Natural killer cell (primary cell): ENCODE measurements at regions of chr14 and their contacts with region 1.

Region 1: DNA sequence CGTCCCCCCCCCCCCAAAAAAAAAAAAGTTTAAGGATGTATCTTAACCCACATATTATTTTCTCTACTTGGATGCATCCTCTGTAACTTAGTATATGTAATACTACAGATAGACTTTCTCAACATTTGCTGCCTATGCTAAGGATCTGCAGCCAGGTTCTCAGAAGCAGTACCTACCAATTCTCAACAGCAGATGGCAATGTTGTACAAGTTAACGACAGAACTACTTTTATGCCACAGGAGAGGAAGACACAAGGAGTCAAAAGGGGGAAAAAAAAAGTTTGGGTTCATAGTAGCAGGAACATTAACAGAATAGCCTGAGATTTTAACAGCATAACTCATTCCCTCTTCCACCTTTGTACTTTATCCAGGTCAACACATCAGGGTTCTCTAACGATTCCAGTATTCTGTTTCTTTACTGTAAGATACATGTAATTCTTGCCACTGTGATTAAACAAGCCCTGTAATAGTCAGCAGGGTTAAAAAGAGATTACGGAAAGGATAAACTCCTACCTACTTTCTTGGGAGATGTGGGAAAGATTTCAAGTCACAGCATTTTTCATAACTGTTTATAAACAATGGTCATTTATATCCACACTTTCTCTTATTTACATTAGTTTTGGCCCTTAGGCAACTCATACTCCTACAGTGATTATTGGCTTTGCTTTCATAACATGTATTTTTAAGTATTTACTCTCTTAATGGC is 5.7 kb upstream of the NEK9 start:
- DNase-seq: peak in 1 of 2 donors; percentile 89
- ATAC-seq: peak; percentile 83 to 93 (median 92)
- H3K4me3 ChIP-seq: no peak overlapping the region
- H3K4me3 Mint-ChIP-seq: no peak overlapping the region
- H3K27ac ChIP-seq: no peak overlapping the region
- H3K27ac Mint-ChIP-seq: peak overlapping the region; percentile 58 to 77
- H3K4me1 ChIP-seq: peaks cover 6% of the 10 kb centered on the region
- H3K4me1 Mint-ChIP-seq: peaks cover 17 to 22% of the 10 kb centered on the region in 2 donors
- H3K27me3 ChIP-seq: no peaks in the 10 kb centered on the region
- H3K27me3 Mint-ChIP-seq: no peaks in the 10 kb centered on the region
- CTCF ChIP-seq: peak; percentile 77

Region 2: GRCh38 chr14:75094896-75095295 is 37.6 kb before region 1 on chr14:
- intact Hi-C with region 1: no loop called
- DNase-seq: no peak
- ATAC-seq: no peak
- H3K4me3 ChIP-seq: no peak overlapping the region
- H3K4me3 Mint-ChIP-seq: no peak overlapping the region
- H3K27ac ChIP-seq: no peak overlapping the region
- H3K27ac Mint-ChIP-seq: no peak overlapping the region
- H3K4me1 ChIP-seq: no peaks in the 10 kb centered on the region
- H3K4me1 Mint-ChIP-seq: no peaks in the 10 kb centered on the region
- H3K27me3 ChIP-seq: no peaks in the 10 kb centered on the region
- H3K27me3 Mint-ChIP-seq: no peaks in the 10 kb centered on the region
- CTCF ChIP-seq: no peak

Region 3: DNA sequence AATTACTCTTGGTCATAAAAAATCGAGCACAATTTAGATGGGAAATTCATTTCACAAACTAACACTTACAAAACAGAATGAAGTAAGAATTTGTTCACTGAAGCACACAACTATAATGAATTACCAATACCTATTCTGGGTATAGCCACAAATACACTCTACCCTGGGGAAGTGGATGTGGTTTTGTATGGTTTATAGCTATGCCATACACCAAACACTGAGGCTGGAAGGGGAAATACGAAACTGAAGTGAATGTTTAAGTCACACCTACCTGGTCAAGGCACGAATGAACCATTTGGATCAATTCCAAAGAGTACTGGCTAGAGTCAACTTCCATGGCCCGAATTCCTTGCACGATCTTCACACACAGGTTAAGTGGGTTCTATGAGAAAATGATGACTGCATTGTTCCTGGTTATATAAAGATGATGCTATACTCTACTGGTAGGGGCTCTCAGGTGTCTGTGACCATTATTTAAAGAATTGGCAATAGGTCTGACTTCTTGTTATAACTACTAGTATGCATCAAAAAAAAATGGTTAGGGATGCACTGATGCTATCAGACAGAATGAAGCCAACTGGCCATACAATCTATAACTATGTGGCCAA is 18.5 kb before region 1 on chr14:
- intact Hi-C with region 1: no loop called
- DNase-seq: peak in 1 of 2 donors; percentile 9
- ATAC-seq: no peak
- H3K4me3 ChIP-seq: no peak overlapping the region
- H3K4me3 Mint-ChIP-seq: no peak overlapping the region
- H3K27ac ChIP-seq: no peak overlapping the region
- H3K27ac Mint-ChIP-seq: no peak overlapping the region
- H3K4me1 ChIP-seq: no peaks in the 10 kb centered on the region
- H3K4me1 Mint-ChIP-seq: peaks cover 7 to 11% of the 10 kb centered on the region in 2 donors
- H3K27me3 ChIP-seq: no peaks in the 10 kb centered on the region
- H3K27me3 Mint-ChIP-seq: no peaks in the 10 kb centered on the region
- CTCF ChIP-seq: no peak

Region 4: GRCh38 chr14:75147423-75148071 is 15.0 kb after region 1 on chr14:
- intact Hi-C with region 1: loop called (anchors 2 kb)
- DNase-seq: peak; percentile 50 to 61
- ATAC-seq: peak; percentile 96 to 100 (median 99)
- H3K4me3 ChIP-seq: no peak overlapping the region
- H3K4me3 Mint-ChIP-seq: peak overlapping the region; percentile 70
- H3K27ac ChIP-seq: peak overlapping the region; percentile 54
- H3K27ac Mint-ChIP-seq: peak overlapping the region; percentile 87 to 90
- H3K4me1 ChIP-seq: peaks cover 25% of the 10 kb centered on the region
- H3K4me1 Mint-ChIP-seq: peaks cover 52 to 53% of the 10 kb centered on the region in 2 donors
- H3K27me3 ChIP-seq: no peaks in the 10 kb centered on the region
- H3K27me3 Mint-ChIP-seq: no peaks in the 10 kb centered on the region
- CTCF ChIP-seq: peak; percentile 50

Region 5: DNA sequence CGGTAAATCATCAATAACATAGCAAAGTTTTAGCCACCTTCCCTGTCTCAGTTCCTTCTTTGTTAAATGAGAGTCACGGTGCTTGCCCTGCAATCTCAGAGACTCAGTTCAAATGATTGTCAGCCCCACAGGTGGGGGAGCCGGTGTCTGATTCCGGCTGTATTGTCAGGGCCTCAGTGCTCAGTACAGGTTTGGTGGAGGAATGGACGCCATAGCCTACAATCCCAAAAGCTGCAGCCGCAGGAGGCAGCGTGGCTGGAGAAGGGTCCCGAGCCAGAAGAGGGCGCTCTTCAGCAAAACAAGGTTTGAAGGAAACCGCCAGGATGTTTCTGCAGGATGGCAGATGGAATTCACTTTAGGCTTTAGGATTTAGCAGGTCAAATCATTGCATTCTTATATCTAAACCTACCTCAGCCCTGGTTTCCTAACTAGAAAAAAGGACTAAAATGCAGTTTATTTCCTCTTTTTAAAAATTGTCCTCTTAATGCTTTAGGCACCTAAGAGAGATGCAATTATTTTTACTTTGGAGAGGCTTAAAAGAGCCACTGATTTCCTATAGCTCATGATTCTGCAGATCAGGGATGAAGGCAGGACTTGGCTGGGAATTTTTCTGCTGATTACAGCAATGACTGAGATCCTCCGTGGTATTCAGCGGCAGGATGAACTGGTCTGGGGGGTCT is 175.3 kb after region 1 on chr14:
- intact Hi-C with region 1: loop called (anchors 1 kb)
- DNase-seq: peak; percentile 55 to 87
- ATAC-seq: peak; percentile 62 to 66 (median 64)
- H3K4me3 ChIP-seq: no peak overlapping the region
- H3K4me3 Mint-ChIP-seq: no peak overlapping the region
- H3K27ac ChIP-seq: no peak overlapping the region
- H3K27ac Mint-ChIP-seq: no peak overlapping the region
- H3K4me1 ChIP-seq: peaks cover 6% of the 10 kb centered on the region
- H3K4me1 Mint-ChIP-seq: peaks cover 4 to 10% of the 10 kb centered on the region in 2 donors
- H3K27me3 ChIP-seq: no peaks in the 10 kb centered on the region
- H3K27me3 Mint-ChIP-seq: peaks cover 0 to 3% of the 10 kb centered on the region in 2 donors
- CTCF ChIP-seq: peak; percentile 83

Region 6: GRCh38 chr14:75489480-75489837 is 356.9 kb after region 1 on chr14:
- intact Hi-C with region 1: loop called (anchors 2 kb)
- DNase-seq: no peak
- ATAC-seq: no peak
- H3K4me3 ChIP-seq: no peak overlapping the region
- H3K4me3 Mint-ChIP-seq: no peak overlapping the region
- H3K27ac ChIP-seq: no peak overlapping the region
- H3K27ac Mint-ChIP-seq: no peak overlapping the region
- H3K4me1 ChIP-seq: peaks cover 5% of the 10 kb centered on the region
- H3K4me1 Mint-ChIP-seq: peaks cover 5 to 10% of the 10 kb centered on the region in 2 donors
- H3K27me3 ChIP-seq: no peaks in the 10 kb centered on the region
- H3K27me3 Mint-ChIP-seq: peaks cover 0 to 6% of the 10 kb centered on the region in 2 donors
- CTCF ChIP-seq: no peak

Region 7: DNA sequence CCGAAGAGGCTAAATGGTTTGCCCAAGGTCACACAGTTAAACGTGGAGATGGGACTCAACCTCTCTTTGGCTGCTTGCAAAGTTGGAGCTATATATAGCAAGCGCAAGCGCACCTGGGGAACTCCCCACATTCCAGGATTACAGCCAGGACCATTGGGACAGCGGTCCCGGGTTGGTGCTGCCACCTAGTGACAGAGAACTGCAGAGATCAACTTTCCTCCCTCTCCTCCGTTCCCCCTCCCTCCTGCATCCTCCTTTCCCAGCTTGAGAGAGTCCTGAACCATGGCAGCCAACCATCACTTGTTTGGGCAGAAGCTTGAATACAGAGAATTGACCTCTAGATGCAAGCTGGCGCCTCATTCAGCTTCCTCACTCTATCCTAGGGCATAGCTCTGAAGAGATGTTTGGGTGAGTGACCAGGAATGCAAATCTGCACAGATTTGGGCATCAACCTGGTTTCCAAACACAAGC is 428.5 kb after region 1 on chr14:
- intact Hi-C with region 1: loop called (anchors 5 kb)
- DNase-seq: peak; percentile 26 to 76
- ATAC-seq: peak in 2 of 3 donors; percentile 64 to 77
- H3K4me3 ChIP-seq: no peak overlapping the region
- H3K4me3 Mint-ChIP-seq: no peak overlapping the region
- H3K27ac ChIP-seq: no peak overlapping the region
- H3K27ac Mint-ChIP-seq: no peak overlapping the region
- H3K4me1 ChIP-seq: peaks cover 5% of the 10 kb centered on the region
- H3K4me1 Mint-ChIP-seq: peaks cover under 1 to 7% of the 10 kb centered on the region in 2 donors
- H3K27me3 ChIP-seq: no peaks in the 10 kb centered on the region
- H3K27me3 Mint-ChIP-seq: no peaks in the 10 kb centered on the region
- CTCF ChIP-seq: peak; percentile 81

Region 8: DNA sequence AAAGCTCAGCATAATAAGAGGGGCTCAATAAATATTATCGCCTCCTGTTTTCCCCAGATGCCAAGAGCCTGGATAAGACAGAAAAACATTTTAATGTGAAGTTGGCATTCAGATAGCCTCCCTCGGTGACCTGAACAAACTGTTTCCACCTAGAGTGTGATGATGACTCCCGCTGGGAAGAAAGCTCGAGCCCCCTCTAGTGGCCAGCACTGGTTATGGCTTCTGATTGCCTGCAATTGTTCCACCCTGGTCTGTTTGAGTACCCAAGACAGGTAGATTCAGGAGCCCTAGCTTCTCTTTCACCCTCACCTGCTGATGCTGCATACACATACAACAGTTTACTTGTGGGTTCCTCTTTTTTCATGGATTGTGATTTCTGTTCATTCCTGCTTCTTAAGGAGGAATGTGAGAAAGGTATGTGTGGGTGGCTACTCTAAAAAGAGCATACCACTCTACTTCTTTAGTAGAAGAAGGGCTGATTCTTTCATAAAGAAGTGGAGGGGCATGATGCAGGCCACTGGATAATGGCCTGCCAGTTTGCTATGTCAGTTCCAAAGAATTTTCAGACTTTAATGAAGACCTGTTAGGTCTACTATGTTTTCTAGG is 521.7 kb after region 1 on chr14:
- intact Hi-C with region 1: loop called (anchors 1 kb)
- DNase-seq: peak; percentile 72 to 87
- ATAC-seq: peak; percentile 91 to 98 (median 96)
- H3K4me3 ChIP-seq: no peak overlapping the region
- H3K4me3 Mint-ChIP-seq: no peak overlapping the region
- H3K27ac ChIP-seq: no peak overlapping the region
- H3K27ac Mint-ChIP-seq: peak overlapping the region in 1 of 2 donors; percentile 72
- H3K4me1 ChIP-seq: no peaks in the 10 kb centered on the region
- H3K4me1 Mint-ChIP-seq: peaks cover 6 to 7% of the 10 kb centered on the region in 2 donors
- H3K27me3 ChIP-seq: no peaks in the 10 kb centered on the region
- H3K27me3 Mint-ChIP-seq: no peaks in the 10 kb centered on the region
- CTCF ChIP-seq: peak; percentile 95

Region 9: GRCh38 chr14:76929927-76930326 is 1797.4 kb after region 1 on chr14:
- intact Hi-C with region 1: no loop called
- DNase-seq: peak in 1 of 2 donors; percentile 89
- ATAC-seq: peak; percentile 63 to 74 (median 65)
- H3K4me3 ChIP-seq: no peak overlapping the region
- H3K4me3 Mint-ChIP-seq: peak overlapping the region; percentile 69
- H3K27ac ChIP-seq: no peak overlapping the region
- H3K27ac Mint-ChIP-seq: peak overlapping the region; percentile 6 to 83
- H3K4me1 ChIP-seq: peaks cover 57% of the 10 kb centered on the region
- H3K4me1 Mint-ChIP-seq: peaks cover 58 to 62% of the 10 kb centered on the region in 2 donors
- H3K27me3 ChIP-seq: no peaks in the 10 kb centered on the region
- H3K27me3 Mint-ChIP-seq: no peaks in the 10 kb centered on the region
- CTCF ChIP-seq: no peak